Pancreas (tissue), 10 donors: ENCODE measurements at regions of chr6 and their contacts with region 1.

Region 1: DNA sequence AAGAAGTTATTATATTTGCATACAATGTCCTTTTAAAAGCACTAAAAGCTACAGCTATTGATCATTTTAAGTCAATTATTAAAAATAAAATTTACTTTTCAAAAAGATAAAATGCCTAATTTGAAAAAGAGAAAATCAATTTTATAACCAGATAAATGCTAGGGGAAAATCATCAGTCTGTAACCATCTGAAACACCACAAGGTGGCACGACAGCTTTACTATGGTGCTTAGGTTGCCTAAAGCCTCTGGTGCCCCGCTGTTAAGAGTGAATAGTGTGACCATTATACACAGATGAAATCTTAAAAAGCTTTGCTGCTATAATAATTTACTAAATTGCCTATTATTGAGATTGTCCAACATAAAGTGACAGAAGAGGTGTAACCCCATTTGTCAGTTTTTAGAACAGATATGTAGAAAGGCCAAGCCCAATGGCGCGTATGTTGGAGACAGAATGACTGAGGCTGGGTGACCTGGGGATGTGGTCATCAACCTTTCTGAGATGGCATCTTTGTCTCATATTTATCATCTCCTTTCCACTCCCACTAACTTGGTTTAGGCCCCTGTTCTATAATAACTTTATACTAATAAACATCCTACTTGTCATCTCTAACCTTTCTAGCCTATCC is 100.8 kb downstream of the MOXD1 start:
- DNase-seq: peak in 1 of 6 donors; percentile 23
- ATAC-seq: peak in 3 of 4 donors; percentile 84 to 91 (median 85)
- H3K4me3 ChIP-seq: no peak overlapping the region
- H3K27ac ChIP-seq: no peak overlapping the region
- H3K4me1 ChIP-seq: no peaks in the 10 kb centered on the region
- H3K27me3 ChIP-seq: no peaks in the 10 kb centered on the region
- CTCF ChIP-seq: peak in 3 of 4 donors; percentile 41 to 58 (median 45)

Region 2: DNA sequence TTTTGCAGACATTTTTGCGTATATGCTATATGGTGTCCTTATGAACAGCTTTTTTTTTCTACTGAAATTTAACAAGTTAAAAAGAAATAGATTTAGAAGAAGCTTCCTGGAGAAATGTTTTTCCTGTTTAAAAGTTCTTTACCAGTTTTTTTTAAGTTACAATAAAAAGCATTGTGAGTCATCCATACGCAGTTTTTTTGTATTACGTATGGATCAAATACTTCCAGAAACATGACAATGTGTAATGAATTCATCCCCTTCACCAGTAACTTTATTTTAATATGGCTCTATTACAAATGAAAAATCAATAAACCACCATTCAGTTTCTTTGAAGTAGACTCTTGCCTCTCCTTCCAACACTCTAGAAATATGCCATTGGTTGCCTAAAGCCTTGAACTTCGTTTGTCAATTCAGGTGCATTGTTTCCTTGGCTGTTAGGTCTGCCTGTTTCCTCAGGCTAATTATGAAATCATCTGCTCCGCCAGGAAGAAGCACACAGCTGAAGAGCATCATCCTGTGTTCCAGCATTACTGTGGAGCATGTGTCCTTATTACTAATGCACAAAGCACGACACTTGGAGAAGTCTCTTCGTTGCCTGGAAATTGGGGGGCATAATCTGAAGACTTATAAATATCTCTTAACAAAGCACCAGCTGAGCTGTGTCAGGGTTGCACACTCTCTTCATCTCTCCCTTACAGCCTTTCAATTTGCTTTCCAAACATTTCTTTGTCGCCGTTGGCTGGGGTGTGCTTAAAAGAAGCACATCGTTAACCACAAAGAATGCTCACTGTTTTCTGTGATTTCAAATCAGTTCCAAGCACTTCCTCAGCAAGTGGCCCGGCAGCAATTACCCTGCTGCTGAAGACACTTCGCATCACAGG is 91.2 kb after region 1 on chr6:
- intact Hi-C with region 1: loop called in 1 of 3 experiments (anchors 10 kb)
- DNase-seq: no peak
- ATAC-seq: peak in 3 of 4 donors; percentile 21 to 60 (median 43)
- H3K4me3 ChIP-seq: no peak overlapping the region
- H3K27ac ChIP-seq: no peak overlapping the region
- H3K4me1 ChIP-seq: no peaks in the 10 kb centered on the region
- H3K27me3 ChIP-seq: no peaks in the 10 kb centered on the region
- CTCF ChIP-seq: no peak

Region 3: GRCh38 chr6:132490024-132490423 is 189.6 kb after region 1 on chr6:
- intact Hi-C with region 1: loop called in 1 of 3 experiments (anchors 10 kb)
- DNase-seq: no peak
- ATAC-seq: peak in 2 of 4 donors; percentile 68 to 82
- H3K4me3 ChIP-seq: no peak overlapping the region
- H3K27ac ChIP-seq: no peak overlapping the region
- H3K4me1 ChIP-seq: no peaks in the 10 kb centered on the region
- H3K27me3 ChIP-seq: no peaks in the 10 kb centered on the region
- CTCF ChIP-seq: no peak